ENCODE measurements at regions of chr17 and their contacts with region 1.

Region 1: DNA sequence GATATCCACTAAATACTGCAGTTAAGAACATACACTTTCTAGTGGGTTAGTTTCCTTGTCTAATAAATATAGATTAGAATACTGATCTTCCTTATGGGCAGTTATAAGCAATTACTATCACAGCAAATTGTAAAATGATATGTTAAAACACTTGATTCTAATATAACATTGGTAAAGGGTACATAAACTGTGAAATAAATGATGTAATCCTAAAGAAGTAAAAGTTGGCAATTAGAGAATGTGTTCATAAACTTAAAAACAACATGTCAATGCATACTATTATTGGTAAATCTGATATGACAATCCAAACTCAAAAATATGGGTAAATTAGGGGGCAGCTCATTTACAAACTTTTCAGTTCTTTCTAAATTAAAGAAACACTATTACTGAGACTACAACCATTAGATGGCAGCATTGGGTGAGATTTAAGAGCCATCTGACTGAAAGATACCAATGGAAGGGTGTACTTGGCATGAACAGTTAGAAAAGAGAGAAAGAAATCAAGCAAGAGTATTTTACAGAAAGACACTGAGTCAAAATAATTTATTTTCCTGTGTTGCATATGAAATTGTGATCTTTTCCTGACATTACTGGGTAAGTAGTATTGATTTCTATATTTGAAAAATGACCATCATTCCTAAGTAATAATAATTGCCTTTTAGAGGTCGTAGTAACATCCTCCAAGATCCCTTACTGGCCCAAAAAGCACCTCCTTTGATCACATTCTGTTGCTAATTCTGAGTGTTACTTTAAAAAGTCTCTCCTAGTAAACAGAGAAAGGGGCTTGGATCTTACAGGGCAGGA is 119.6 kb downstream of the SPAG9 start:
- DNase-seq: peak; percentile 27
- ATAC-seq: peak; percentile 82
- H3K4me3 ChIP-seq: no peak overlapping the region
- H3K27ac ChIP-seq: no peak overlapping the region
- H3K4me1 ChIP-seq: no peaks in the 10 kb centered on the region
- H3K27me3 ChIP-seq: no peaks in the 10 kb centered on the region
- CTCF ChIP-seq: peak; percentile 23 to 62 (median 46); a peak in 4 of 6 replicates
- EP300 ChIP-seq: no peak
- POLR2A ChIP-seq: no peak
- RAD21 ChIP-seq: peak; percentile 86

Region 2: GRCh38 chr17:50719144-50719923 is 281.7 kb before region 1 on chr17 and contains the start of gene LUC7L3:
- CTCF ChIA-PET with region 1: no interaction called
- POLR2A ChIA-PET with region 1: no interaction called
- RAD21 ChIA-PET with region 1: no interaction called
- SMC1A ChIA-PET with region 1: no interaction called
- in situ Hi-C with region 1: no loop called
- intact Hi-C with region 1: no loop called
- DNase-seq: peak; percentile 71
- ATAC-seq: peak; percentile 94
- H3K4me3 ChIP-seq: peak within 1 kb of the TSS; percentile 86
- H3K27ac ChIP-seq: peak within 1 kb of the TSS; percentile 96
- H3K4me1 ChIP-seq: no peaks in the 10 kb centered on the region; the same call in 1 of the 2 replicates
- H3K27me3 ChIP-seq: no peaks in the 10 kb centered on the region
- CTCF ChIP-seq: no peak
- EP300 ChIP-seq: no peak
- POLR2A ChIP-seq: peak; percentile 99
- RAD21 ChIP-seq: no peak
- polyA plus RNA-seq, gene LUC7L3: 133 to 164 TPM

Region 3: DNA sequence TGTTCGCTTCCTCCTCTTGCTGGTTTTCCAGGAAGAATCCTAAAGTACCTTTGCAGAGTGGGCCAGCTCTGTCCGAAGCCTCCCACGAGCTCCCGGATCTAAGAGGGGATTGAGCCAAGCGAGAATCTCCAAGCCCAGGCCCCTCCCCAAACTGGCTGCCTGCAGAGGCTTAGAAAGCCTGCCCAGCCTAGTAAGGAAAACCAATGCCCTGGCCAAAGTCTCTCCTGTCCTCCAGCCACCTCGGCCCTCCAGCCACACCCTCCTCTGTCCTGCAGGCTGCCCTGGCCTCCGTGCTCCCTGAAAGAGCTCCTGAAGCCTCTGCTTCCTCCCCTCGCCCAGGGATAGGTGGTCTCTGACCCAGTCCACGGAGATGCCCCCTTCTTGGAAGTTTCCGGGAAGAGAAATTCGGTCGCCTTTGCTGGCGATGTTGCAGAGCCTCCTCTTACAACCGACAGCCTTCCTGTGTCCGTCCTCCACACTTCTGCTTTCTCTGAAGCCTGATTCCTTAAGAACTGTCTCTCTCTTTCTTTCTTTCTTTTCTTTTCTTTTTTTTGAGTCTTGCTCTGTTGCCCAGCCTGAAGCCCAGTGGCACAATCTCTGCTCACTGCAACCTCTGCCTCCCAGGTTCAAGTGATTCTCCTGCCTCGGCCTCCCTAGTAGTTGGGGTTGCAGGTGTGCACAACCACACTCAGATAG is 80.0 kb before region 1 on chr17:
- CTCF ChIA-PET with region 1: no interaction called
- POLR2A ChIA-PET with region 1: no interaction called
- RAD21 ChIA-PET with region 1: no interaction called
- SMC1A ChIA-PET with region 1: no interaction called
- in situ Hi-C with region 1: no loop called
- intact Hi-C with region 1: no loop called
- DNase-seq: no peak
- ATAC-seq: no peak
- H3K4me3 ChIP-seq: no peak overlapping the region
- H3K27ac ChIP-seq: no peak overlapping the region
- H3K4me1 ChIP-seq: peaks cover 20% of the 10 kb centered on the region
- H3K27me3 ChIP-seq: no peaks in the 10 kb centered on the region
- CTCF ChIP-seq: no peak
- EP300 ChIP-seq: no peak
- POLR2A ChIP-seq: no peak
- RAD21 ChIP-seq: no peak

Region 4: DNA sequence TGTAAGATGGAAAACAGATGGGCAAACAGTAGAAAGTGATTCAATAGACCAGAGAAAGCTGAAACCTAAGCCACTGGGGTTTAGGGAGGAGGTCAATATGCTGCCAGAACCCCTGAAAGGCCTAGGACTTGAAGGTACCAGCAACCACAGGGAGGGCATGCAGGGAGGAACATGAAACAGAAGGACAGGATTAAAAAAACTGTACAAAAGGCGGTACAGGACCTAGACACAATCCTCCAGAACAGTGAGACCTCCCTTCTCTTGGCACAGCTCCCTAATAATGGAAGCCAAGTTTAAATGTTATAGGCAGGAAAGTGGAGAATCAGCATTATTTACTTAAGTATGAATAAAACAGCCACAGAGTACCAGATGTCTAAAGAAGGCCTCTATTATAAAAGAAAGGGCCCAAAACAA is 14.1 kb after region 1 on chr17:
- CTCF ChIA-PET with region 1: interaction called, 12 read pairs
- POLR2A ChIA-PET with region 1: interaction called, 3 read pairs
- RAD21 ChIA-PET with region 1: interaction called, 8 read pairs
- SMC1A ChIA-PET with region 1: interaction called, 22 read pairs
- in situ Hi-C with region 1: no loop called
- intact Hi-C with region 1: no loop called
- DNase-seq: no peak
- ATAC-seq: no peak
- H3K4me3 ChIP-seq: no peak overlapping the region
- H3K27ac ChIP-seq: peak overlapping the region; percentile 42; the same call in 1 of the 2 replicates
- H3K4me1 ChIP-seq: no peaks in the 10 kb centered on the region
- H3K27me3 ChIP-seq: no peaks in the 10 kb centered on the region
- CTCF ChIP-seq: no peak
- EP300 ChIP-seq: no peak
- POLR2A ChIP-seq: no peak
- RAD21 ChIP-seq: no peak

Region 5: GRCh38 chr17:51029568-51030463 is 28.8 kb after region 1 on chr17:
- CTCF ChIA-PET with region 1: interaction called, 15 read pairs
- POLR2A ChIA-PET with region 1: no interaction called
- RAD21 ChIA-PET with region 1: interaction called, 3 read pairs
- SMC1A ChIA-PET with region 1: interaction called, 5 read pairs
- in situ Hi-C with region 1: no loop called
- intact Hi-C with region 1: no loop called
- DNase-seq: no peak
- ATAC-seq: peak; percentile 87
- H3K4me3 ChIP-seq: no peak overlapping the region
- H3K27ac ChIP-seq: peak overlapping the region; percentile 51
- H3K4me1 ChIP-seq: peaks cover 5% of the 10 kb centered on the region
- H3K27me3 ChIP-seq: no peaks in the 10 kb centered on the region
- CTCF ChIP-seq: no peak
- EP300 ChIP-seq: 0 out of 4 replicates have a peak, but pooled peaks of 1 of the 2 experiments have one; percentile 9
- POLR2A ChIP-seq: no peak
- RAD21 ChIP-seq: no peak

Region 6: GRCh38 chr17:51046514-51047384 is 45.7 kb after region 1 on chr17:
- CTCF ChIA-PET with region 1: interaction called, 472 read pairs
- POLR2A ChIA-PET with region 1: interaction called, 3 read pairs
- RAD21 ChIA-PET with region 1: interaction called, 147 read pairs
- SMC1A ChIA-PET with region 1: interaction called, 241 read pairs
- in situ Hi-C with region 1: no loop called
- intact Hi-C with region 1: no loop called
- DNase-seq: no peak
- ATAC-seq: no peak
- H3K4me3 ChIP-seq: no peak overlapping the region
- H3K27ac ChIP-seq: no peak overlapping the region
- H3K4me1 ChIP-seq: peaks cover 29% of the 10 kb centered on the region
- H3K27me3 ChIP-seq: no peaks in the 10 kb centered on the region
- CTCF ChIP-seq: no peak
- EP300 ChIP-seq: no peak
- POLR2A ChIP-seq: no peak
- RAD21 ChIP-seq: no peak

Region 7: DNA sequence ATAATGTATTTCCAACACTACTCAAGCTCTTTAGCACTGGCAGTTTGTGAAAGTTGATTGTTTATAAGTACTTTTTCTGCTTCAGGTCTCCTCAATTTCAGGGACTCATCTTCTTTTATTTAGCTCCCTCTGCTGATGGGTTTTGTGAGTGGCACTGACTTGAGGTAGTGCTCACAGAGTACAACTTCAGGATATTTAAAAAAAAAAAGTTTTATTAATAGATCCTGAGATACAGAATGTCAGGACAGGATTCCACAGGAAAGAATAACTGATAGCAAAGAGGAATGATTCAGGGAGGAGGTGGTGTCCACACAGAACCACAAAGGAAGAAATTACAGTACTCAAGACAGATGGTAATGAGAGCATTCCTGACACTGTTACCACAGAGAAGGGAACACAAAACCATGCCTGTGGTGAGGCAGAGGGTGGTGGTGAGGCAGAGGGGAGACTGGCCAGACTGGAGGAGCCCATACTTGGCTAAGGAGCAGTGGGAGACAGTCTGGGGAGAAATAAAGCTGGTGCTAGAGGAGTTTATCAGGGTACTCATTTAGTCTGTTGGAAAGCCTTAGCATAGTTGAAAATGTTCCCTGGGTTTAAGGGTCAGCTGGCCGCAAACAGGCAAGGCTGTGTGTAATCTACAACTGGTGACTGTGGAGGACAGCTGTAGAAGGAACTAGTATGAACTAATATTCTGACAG is 55.9 kb after region 1 on chr17:
- CTCF ChIA-PET with region 1: interaction called, 472 read pairs
- POLR2A ChIA-PET with region 1: interaction called, 3 read pairs
- RAD21 ChIA-PET with region 1: interaction called, 147 read pairs
- SMC1A ChIA-PET with region 1: interaction called, 241 read pairs
- in situ Hi-C with region 1: no loop called
- intact Hi-C with region 1: loop called (anchors 1 kb)
- DNase-seq: no peak
- ATAC-seq: peak; percentile 86
- H3K4me3 ChIP-seq: no peak overlapping the region
- H3K27ac ChIP-seq: no peak overlapping the region
- H3K4me1 ChIP-seq: peaks cover 24% of the 10 kb centered on the region
- H3K27me3 ChIP-seq: no peaks in the 10 kb centered on the region
- CTCF ChIP-seq: peak; percentile 57 to 71 (median 71)
- EP300 ChIP-seq: no peak
- POLR2A ChIP-seq: no peak
- RAD21 ChIP-seq: peak; percentile 87

Region 8: GRCh38 chr17:51120739-51121617 is 119.9 kb after region 1 on chr17 and contains the start of gene SPAG9:
- CTCF ChIA-PET with region 1: interaction called, 4 read pairs
- POLR2A ChIA-PET with region 1: interaction called, 3 read pairs
- RAD21 ChIA-PET with region 1: interaction called, 5 read pairs
- SMC1A ChIA-PET with region 1: interaction called, 13 read pairs
- in situ Hi-C with region 1: no loop called
- intact Hi-C with region 1: no loop called
- DNase-seq: peak; percentile 60
- ATAC-seq: peak; percentile 78
- H3K4me3 ChIP-seq: peak within 1 kb of the TSS; percentile 85
- H3K27ac ChIP-seq: peak within 1 kb of the TSS; percentile 81
- H3K4me1 ChIP-seq: peaks cover 15% of the 10 kb centered on the region; the same call in 1 of the 2 replicates
- H3K27me3 ChIP-seq: no peaks in the 10 kb centered on the region
- CTCF ChIP-seq: no peak
- EP300 ChIP-seq: peak in 1 of 2 experiments; percentile 28; a peak in 1 of 4 replicates
- POLR2A ChIP-seq: peak; percentile 88
- RAD21 ChIP-seq: no peak
- polyA plus RNA-seq, gene SPAG9: 6.6 to 6.8 TPM

Region 9: DNA sequence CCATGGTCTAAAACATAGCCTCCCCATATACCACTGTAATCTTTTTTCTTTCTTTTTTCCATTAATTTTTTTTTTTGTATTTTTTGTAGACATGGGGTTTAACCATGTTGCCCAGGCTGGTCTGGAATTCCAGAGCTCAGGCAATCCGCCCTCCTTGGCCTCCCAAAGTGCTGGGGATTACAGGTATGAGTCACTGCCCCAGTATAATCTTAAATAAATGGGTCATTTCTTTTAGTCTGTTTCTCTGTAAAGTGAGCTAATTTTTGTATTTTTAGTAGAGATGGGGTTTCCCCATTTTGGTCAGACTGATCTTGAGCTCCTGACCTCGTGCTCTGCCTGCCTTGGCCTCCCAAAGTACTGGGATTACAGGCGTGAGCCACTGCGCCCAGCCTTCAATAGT is 146.6 kb after region 1 on chr17:
- CTCF ChIA-PET with region 1: interaction called, 103 read pairs
- POLR2A ChIA-PET with region 1: interaction called, 3 read pairs
- RAD21 ChIA-PET with region 1: interaction called, 35 read pairs
- SMC1A ChIA-PET with region 1: interaction called, 64 read pairs
- in situ Hi-C with region 1: loop called (anchors 5 kb)
- intact Hi-C with region 1: no loop called
- DNase-seq: no peak
- ATAC-seq: peak; percentile 78
- H3K4me3 ChIP-seq: no peak overlapping the region
- H3K27ac ChIP-seq: no peak overlapping the region
- H3K4me1 ChIP-seq: peaks cover 3% of the 10 kb centered on the region
- H3K27me3 ChIP-seq: no peaks in the 10 kb centered on the region
- CTCF ChIP-seq: no peak
- EP300 ChIP-seq: no peak
- POLR2A ChIP-seq: no peak
- RAD21 ChIP-seq: no peak

Region 10: GRCh38 chr17:51397361-51398127 is 396.5 kb after region 1 on chr17:
- CTCF ChIA-PET with region 1: no interaction called
- POLR2A ChIA-PET with region 1: no interaction called
- RAD21 ChIA-PET with region 1: no interaction called
- SMC1A ChIA-PET with region 1: no interaction called
- in situ Hi-C with region 1: no loop called
- intact Hi-C with region 1: no loop called
- DNase-seq: no peak
- ATAC-seq: no peak
- H3K4me3 ChIP-seq: no peak overlapping the region
- H3K27ac ChIP-seq: no peak overlapping the region
- H3K4me1 ChIP-seq: no peaks in the 10 kb centered on the region
- H3K27me3 ChIP-seq: peaks cover 0 to 6% of the 10 kb centered on the region in 2 experiments; a peak in 1 of 4 replicates
- CTCF ChIP-seq: no peak
- EP300 ChIP-seq: no peak
- POLR2A ChIP-seq: no peak
- RAD21 ChIP-seq: no peak